Naive thymus-derived CD4-positive, alpha-beta T cell (primary cell): ENCODE measurements at regions of chr9 and their contacts with region 1.

Region 1: GRCh38 chr9:37027582-37028419 is 6.3 kb downstream of the PAX5 start:
- DNase-seq: peak; percentile 67 to 87 (median 77)
- ATAC-seq: peak; percentile 96
- H3K4me3 ChIP-seq: peak overlapping the region; percentile 29
- H3K4me3 Mint-ChIP-seq: peak overlapping the region; percentile 38 to 77 (median 62)
- H3K27ac ChIP-seq: no peak overlapping the region
- H3K27ac Mint-ChIP-seq: peak overlapping the region in 1 of 9 donors; percentile 42
- H3K4me1 ChIP-seq: peaks cover 25 to 56% of the 10 kb centered on the region in 2 donors
- H3K4me1 Mint-ChIP-seq: peaks cover 18 to 50% (median 37%) of the 10 kb centered on the region in 7 donors
- H3K27me3 ChIP-seq: peaks cover 34 to 56% of the 10 kb centered on the region in 2 donors
- H3K27me3 Mint-ChIP-seq: peaks cover 73 to 95% (median 81%) of the 10 kb centered on the region in 5 donors

Region 2: GRCh38 chr9:36987891-36988290 is 39.9 kb before region 1 on chr9:
- CTCF ChIA-PET with region 1: no interaction called
- POLR2A ChIA-PET with region 1: no interaction called
- intact Hi-C with region 1: loop called in 1 of 2 experiments (anchors 2 kb)
- DNase-seq: no peak
- ATAC-seq: no peak
- H3K4me3 ChIP-seq: no peak overlapping the region
- H3K4me3 Mint-ChIP-seq: peak overlapping the region in 3 of 10 donors; percentile 39 to 59 (median 43)
- H3K27ac ChIP-seq: no peak overlapping the region
- H3K27ac Mint-ChIP-seq: no peak overlapping the region
- H3K4me1 ChIP-seq: no peaks in the 10 kb centered on the region
- H3K4me1 Mint-ChIP-seq: peaks cover 5 to 21% (median 18%) of the 10 kb centered on the region in 7 donors
- H3K27me3 ChIP-seq: peaks cover 5 to 18% of the 10 kb centered on the region in 2 donors
- H3K27me3 Mint-ChIP-seq: peaks cover 73 to 77% (median 73%) of the 10 kb centered on the region in 5 donors

Region 3: DNA sequence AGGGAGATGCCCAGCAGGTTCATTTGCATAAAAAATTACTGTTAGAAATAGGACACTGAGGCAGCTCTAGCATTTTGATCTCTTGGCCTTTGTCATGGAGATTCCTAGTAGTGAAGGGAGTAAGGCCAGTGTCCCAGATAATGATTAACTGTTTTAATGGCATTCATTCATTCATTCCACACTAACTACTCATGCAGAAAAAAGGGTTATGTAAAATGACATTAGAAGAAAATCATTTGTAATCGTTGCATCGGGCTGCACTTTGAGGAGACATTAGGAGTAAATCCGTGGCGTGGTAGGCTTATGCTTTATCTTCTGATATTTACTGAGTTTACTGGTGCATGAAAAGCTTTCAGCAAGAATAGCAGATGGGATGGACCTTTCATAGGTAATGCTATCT is 312.1 kb after region 1 on chr9:
- CTCF ChIA-PET with region 1: no interaction called
- POLR2A ChIA-PET with region 1: no interaction called
- intact Hi-C with region 1: no loop called
- DNase-seq: no peak
- ATAC-seq: no peak
- H3K4me3 ChIP-seq: no peak overlapping the region
- H3K4me3 Mint-ChIP-seq: no peak overlapping the region
- H3K27ac ChIP-seq: no peak overlapping the region
- H3K27ac Mint-ChIP-seq: no peak overlapping the region
- H3K4me1 ChIP-seq: no peaks in the 10 kb centered on the region
- H3K4me1 Mint-ChIP-seq: peaks cover 0 to 12% (median 0%) of the 10 kb centered on the region in 7 donors
- H3K27me3 ChIP-seq: no peaks in the 10 kb centered on the region
- H3K27me3 Mint-ChIP-seq: no peaks in the 10 kb centered on the region